Right ventricle myocardium inferior (tissue), 1 donor: ENCODE measurements at regions of chr6 and their contacts with region 1.

Region 1: GRCh38 chr6:163413345-163414116 is 987 bp upstream of the QKI start:
- DNase-seq: peak; percentile 95
- ATAC-seq: peak; percentile 92

Region 2: DNA sequence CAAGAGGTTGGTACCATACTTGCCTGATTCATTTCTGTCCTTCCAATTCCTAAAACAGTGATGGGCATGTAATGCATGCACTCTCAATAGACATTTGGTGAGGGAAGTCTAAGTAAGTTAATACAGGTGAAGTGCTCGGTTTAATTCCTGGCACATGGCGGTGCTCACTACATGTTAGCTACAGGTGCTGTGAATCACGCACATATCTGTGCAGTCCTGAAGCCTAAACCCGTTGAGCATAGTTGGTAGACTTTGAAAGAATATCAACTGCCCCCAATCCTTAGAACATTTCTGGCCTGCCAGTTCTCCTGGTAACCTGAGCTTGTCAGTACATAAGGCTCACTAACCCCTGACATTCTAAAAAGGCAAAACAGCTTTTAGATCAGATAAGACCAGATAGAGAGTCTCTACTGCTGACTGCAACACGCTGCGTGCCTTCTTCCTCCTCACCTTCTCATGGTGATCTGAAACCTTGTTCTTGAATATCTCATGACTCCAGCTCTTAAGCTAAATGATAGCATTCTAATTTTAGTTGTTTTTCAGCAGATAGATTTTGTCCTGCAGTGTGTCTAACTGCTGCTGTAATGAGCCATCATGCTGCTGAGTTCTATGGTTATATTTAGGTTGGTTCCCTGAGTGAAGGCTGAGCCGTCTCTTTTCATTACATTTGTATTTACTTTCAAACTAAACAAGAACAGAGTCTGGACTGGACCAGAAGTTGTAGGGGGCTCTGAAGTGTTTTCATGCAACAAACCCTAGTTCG is 327.5 kb before region 1 on chr6:
- intact Hi-C with region 1: loop called (anchors 5 kb)
- DNase-seq: no peak
- ATAC-seq: peak; percentile 85

Region 3: GRCh38 chr6:163207431-163208383 is 205.8 kb before region 1 on chr6:
- intact Hi-C with region 1: loop called (anchors 1 kb)
- DNase-seq: no peak
- ATAC-seq: no peak

Region 4: DNA sequence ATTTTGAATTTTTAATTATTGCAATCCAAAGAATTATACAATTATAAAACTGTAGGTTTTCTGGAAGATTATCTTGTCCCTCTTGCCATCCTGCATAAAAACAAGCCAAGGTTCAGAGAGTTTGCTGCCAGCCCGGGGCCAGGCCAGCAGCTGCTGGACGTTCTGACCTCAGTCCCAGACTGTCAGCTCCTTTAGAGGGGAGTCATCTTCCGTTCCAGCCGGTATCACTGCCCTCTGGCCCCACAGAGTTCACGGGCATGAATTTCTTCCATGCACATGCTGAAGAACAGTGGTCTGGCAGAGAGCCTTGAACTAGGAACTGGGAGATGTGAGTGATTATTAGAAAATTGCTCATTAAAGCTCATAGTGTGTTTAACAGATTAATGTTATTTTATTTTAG is 129.4 kb before region 1 on chr6:
- intact Hi-C with region 1: loop called (anchors 2 kb)
- DNase-seq: no peak
- ATAC-seq: no peak

Region 5: GRCh38 chr6:163565140-163565539 is 151.6 kb after region 1 on chr6:
- intact Hi-C with region 1: loop called (anchors 5 kb)
- DNase-seq: no peak
- ATAC-seq: peak; percentile 32

Region 6: GRCh38 chr6:163956571-163957407 is 543.3 kb after region 1 on chr6:
- intact Hi-C with region 1: loop called (anchors 2 kb)
- DNase-seq: peak; percentile 83
- ATAC-seq: peak; percentile 87

Region 7: GRCh38 chr6:164106345-164106769 is 692.8 kb after region 1 on chr6:
- intact Hi-C with region 1: loop called (anchors 2 kb)
- DNase-seq: peak; percentile 80
- ATAC-seq: peak; percentile 41